RWPE1 (cell line): ENCODE measurements at regions of chr16 and their contacts with region 1.

Region 1: GRCh38 chr16:71412270-71413160 is 29.3 kb downstream of the TLE7 start:
- DNase-seq: peak; percentile 85
- H3K27ac ChIP-seq: no peak overlapping the region
- CTCF ChIP-seq: peak; percentile 88

Region 2: GRCh38 chr16:71358464-71358998 is 54.0 kb before region 1 on chr16 and contains the start of gene CALB2:
- CTCF ChIA-PET with region 1: no interaction called
- POLR2A ChIA-PET with region 1: no interaction called
- DNase-seq: peak; percentile 62
- H3K27ac ChIP-seq: no peak within 1 kb of the TSS
- CTCF ChIP-seq: peak; percentile 98

Region 3: GRCh38 chr16:71499775-71500364 is 87.4 kb after region 1 on chr16:
- CTCF ChIA-PET with region 1: interaction called, 32 read pairs
- POLR2A ChIA-PET with region 1: interaction called, 3 read pairs
- DNase-seq: peak; percentile 59
- H3K27ac ChIP-seq: no peak overlapping the region
- CTCF ChIP-seq: peak; percentile 76

Region 4: GRCh38 chr16:71526111-71526631 is 113.7 kb after region 1 on chr16 and contains the start of gene CHST4:
- CTCF ChIA-PET with region 1: interaction called, 13 read pairs
- POLR2A ChIA-PET with region 1: no interaction called
- DNase-seq: peak; percentile 57
- H3K27ac ChIP-seq: no peak within 1 kb of the TSS; the same call in 1 of the 2 replicates
- CTCF ChIP-seq: no peak